MCF 10A (cell line): ENCODE measurements at regions of chr2 and their contacts with region 1.

Region 1: DNA sequence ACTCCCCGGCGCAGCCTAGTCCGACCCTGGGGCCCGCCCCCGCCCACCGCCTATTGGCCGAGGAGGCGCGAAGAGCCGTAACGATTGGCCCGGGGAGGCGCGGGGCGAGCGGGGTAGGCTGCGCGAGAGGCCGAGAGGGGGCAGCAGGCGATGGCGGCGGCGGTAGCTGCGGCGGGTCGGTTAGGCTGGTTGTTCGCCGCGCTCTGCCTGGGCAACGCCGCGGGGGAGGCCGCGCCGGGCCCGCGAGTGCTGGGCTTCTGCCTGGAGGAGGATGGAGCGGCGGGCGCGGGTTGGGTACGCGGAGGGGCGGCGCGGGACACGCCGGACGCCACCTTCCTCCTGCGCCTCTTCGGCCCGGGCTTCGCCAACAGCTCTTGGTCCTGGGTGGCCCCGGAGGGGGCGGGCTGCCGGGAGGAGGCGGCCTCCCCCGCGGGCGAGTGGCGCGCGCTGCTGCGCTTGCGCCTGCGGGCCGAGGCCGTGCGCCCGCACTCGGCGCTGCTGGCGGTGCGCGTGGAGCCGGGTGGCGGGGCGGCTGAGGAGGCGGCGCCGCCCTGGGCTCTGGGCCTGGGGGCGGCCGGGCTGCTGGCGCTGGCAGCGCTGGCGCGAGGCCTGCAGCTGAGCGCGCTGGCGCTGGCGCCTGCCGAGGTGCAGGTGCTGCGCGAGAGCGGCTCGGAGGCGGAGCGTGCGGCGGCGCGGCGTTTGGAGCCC is at the start of gene CNNM3:
- DNase-seq: peak; percentile 92
- H3K4me3 Mint-ChIP-seq: peak within 1 kb of the TSS; percentile 77
- H3K27ac Mint-ChIP-seq: peak within 1 kb of the TSS; percentile 18
- H3K4me1 Mint-ChIP-seq: peaks cover 20% of the 10 kb centered on the region
- H3K27me3 Mint-ChIP-seq: no peaks in the 10 kb centered on the region
- CTCF ChIP-seq: peak; percentile 59
- total RNA-seq, gene CNNM3: 9.1 and 9.9 TPM in 2 replicates

Region 2: DNA sequence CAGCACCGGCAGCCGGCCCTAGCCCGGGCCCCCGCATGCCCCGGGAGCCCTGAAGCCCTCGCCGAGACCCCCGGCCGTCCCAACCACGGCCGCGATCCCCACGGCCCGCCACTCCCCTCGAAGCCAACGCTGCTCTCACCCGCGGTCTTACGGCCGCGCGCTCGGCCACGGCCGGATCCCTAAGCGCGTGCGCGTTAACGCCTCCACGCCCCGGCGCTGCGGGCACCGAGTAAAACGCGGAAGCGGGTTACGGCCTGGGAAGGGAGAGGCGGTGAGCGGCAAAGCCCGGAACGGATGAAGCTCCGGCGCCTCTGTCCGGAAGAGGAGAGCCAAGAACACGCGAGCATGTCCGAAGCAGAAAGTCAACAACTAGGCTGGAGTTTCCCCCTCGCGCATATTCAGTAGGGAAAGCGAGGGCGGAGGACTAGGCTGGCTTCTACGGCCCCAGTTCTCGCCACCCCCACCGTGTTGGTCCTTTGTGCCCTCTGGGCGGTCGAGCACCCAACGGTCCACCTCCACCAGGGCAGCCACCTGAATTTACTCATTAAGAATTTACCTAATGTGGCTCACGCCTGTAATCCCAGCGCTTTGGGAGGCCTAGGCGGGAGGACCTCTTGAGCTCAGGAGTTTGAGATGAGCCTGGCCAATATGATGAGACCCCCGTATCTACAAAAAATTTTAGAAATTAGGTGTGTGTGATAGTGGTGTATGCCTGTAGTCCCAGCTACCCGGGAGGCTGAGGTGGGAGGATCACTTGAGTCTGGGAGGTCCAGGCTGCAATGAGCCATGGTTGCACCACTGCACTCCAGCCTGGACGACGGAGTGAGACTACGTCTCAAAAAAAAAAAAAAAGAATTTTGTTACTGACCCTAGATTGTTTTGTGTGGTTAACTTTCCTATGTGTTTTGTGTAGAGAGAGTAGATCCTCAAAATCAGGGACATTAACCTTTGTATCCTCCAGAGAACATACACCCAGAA is 177.8 kb before region 1 on chr2 and contains the start of gene KANSL3:
- CTCF ChIA-PET with region 1: no interaction called
- POLR2A ChIA-PET with region 1: interaction called, 13 read pairs
- intact Hi-C with region 1: no loop called
- DNase-seq: peak; percentile 92
- H3K4me3 Mint-ChIP-seq: peak within 1 kb of the TSS; percentile 83
- H3K27ac Mint-ChIP-seq: peak within 1 kb of the TSS; percentile 88
- H3K4me1 Mint-ChIP-seq: peaks cover 20% of the 10 kb centered on the region
- H3K27me3 Mint-ChIP-seq: no peaks in the 10 kb centered on the region
- CTCF ChIP-seq: no peak
- total RNA-seq, gene KANSL3: 36.0 and 41.4 TPM in 2 replicates

Region 3: DNA sequence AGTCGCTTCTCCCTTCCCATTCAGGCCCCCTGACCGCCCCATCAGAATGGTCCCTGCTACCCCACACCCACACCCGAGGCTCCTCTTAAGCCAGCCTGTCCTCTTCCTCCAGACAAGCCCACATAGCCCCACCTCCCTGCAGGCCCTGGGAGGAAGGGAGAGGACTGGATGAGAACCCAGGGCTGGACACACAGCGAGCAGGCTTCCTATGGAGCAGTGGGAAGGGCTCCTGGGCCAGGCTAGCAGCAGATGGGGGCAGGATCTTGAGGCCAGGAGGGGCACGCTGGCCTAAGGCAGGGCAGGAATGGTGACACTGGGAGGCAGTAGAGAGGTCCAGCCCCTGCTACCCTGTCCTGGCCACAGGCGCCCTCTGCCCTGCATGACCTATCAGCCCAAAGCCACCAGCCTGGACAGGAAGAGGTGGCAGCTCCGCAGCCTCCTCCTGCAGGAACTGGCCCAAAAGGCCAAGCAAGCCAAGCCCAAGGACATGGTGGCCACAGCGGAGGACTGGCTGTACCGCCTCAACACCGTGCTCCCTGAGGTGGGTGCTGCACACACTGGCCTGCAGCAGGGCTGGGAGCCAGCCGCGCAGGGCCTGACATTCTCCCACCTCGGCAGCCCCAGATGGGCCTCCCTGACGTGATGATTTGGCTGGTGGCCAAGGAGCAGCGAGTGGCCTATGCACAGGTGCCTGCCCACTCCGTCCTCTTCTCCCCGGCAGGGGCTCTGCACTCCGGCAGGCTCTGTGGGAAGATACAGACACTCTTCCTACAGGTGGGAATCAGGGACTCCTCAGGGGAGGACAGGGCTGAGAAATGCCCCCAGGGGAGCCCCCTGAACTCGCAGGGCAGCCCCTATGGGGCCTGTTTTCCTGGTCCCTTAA is 130.5 kb before region 1 on chr2:
- CTCF ChIA-PET with region 1: no interaction called
- POLR2A ChIA-PET with region 1: no interaction called
- intact Hi-C with region 1: no loop called
- DNase-seq: no peak
- H3K4me3 Mint-ChIP-seq: no peak overlapping the region
- H3K27ac Mint-ChIP-seq: no peak overlapping the region
- H3K4me1 Mint-ChIP-seq: no peaks in the 10 kb centered on the region
- H3K27me3 Mint-ChIP-seq: peaks cover 2% of the 10 kb centered on the region
- CTCF ChIP-seq: no peak

Region 4: DNA sequence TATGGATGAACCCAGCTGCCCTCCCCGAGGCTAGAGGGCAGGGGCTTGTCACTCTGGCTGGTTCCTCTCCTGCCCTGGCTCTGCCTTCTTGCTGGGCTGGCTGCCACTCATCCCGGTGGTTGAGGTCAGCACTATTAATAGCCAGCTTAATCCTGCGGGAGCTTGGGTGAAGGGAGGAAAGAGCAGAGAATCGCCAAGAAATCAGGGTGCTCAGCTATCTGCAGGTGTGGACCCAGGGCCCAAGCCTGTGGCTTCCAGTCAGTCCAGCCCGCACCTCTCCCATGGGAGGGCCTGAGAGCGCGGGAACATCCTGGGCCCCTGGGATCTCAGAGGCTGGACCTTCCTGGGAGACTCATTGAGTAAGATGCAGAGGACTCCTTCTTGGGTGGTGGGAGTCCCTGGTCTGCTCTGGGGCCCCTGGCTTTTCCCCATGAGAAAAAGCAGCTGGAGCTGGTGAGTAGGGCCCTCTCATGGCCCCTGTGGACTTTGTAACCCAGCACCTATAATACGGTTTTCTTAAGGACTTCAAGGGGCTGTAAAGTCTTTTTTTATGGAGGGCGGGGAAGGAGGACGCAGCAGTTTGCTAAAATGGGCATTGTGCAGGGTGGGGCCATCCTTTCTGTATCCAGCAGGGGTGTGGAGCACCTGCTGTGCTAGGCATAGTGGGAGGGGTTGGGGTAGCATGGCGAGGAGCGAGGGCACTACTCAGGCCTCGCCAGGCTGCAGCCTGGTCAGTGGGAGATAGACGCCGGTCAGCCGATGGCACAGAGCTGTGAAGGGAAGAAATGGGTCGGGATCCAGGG is 27.6 kb before region 1 on chr2:
- CTCF ChIA-PET with region 1: no interaction called
- POLR2A ChIA-PET with region 1: interaction called, 15 read pairs
- intact Hi-C with region 1: no loop called
- DNase-seq: peak; percentile 54
- H3K4me3 Mint-ChIP-seq: no peak overlapping the region
- H3K27ac Mint-ChIP-seq: peak overlapping the region; percentile 92
- H3K4me1 Mint-ChIP-seq: peaks cover 15% of the 10 kb centered on the region
- H3K27me3 Mint-ChIP-seq: no peaks in the 10 kb centered on the region
- CTCF ChIP-seq: no peak

Region 5: GRCh38 chr2:96856776-96857673 is 40.7 kb after region 1 on chr2:
- CTCF ChIA-PET with region 1: interaction called, 5 read pairs
- POLR2A ChIA-PET with region 1: interaction called, 16 read pairs
- intact Hi-C with region 1: no loop called
- DNase-seq: no peak
- H3K4me3 Mint-ChIP-seq: peak overlapping the region; percentile 60
- H3K27ac Mint-ChIP-seq: peak overlapping the region; percentile 49
- H3K4me1 Mint-ChIP-seq: peaks cover 14% of the 10 kb centered on the region
- H3K27me3 Mint-ChIP-seq: no peaks in the 10 kb centered on the region
- CTCF ChIP-seq: no peak

Region 6: DNA sequence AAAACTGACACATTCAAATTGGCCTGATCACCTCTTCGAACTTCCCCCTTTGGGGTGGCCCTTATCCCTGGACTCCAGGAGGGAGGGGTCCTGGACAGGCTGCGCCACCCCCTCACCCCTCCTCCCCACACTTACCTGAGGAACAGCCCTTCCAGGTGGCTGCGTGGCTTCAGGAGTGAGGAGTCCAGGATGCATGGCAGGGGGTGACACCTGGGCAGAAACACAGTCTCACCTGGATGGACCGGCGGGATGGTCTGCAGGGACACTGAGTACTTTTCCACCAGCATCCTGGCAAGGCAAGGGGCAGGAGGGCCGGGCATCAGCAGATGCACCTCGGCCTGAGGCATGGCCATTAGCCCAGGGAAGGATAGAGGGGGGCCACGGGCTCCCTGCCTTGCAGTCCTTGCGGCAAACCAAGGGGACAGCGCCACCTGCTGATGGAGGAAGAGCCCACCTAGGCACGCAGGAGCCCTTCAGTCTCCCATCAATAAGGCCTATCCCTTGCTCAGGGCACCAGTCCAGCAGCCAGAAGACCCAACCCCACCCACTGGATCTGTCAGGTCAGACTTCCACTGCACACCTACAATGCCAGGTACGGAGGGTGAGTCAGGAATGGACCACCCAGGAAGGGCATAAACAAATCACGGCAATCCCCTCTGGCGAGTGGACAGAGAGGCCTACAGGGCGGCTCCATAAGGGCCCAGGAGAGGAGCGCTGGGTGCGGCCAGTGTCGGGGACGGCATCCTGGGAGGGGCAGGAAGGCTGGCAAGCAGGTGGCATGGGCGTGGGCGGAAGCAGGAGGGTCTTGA is 144.1 kb after region 1 on chr2:
- CTCF ChIA-PET with region 1: no interaction called
- POLR2A ChIA-PET with region 1: no interaction called
- intact Hi-C with region 1: loop called (anchors 2 kb)
- DNase-seq: peak; percentile 83
- H3K4me3 Mint-ChIP-seq: no peak overlapping the region
- H3K27ac Mint-ChIP-seq: no peak overlapping the region
- H3K4me1 Mint-ChIP-seq: no peaks in the 10 kb centered on the region
- H3K27me3 Mint-ChIP-seq: no peaks in the 10 kb centered on the region
- CTCF ChIP-seq: peak; percentile 94

Region 7: GRCh38 chr2:98127229-98127989 is 1311.1 kb after region 1 on chr2:
- CTCF ChIA-PET with region 1: no interaction called
- POLR2A ChIA-PET with region 1: no interaction called
- intact Hi-C with region 1: no loop called
- DNase-seq: peak; percentile 63
- H3K4me3 Mint-ChIP-seq: no peak overlapping the region
- H3K27ac Mint-ChIP-seq: no peak overlapping the region
- H3K4me1 Mint-ChIP-seq: peaks cover 6% of the 10 kb centered on the region
- H3K27me3 Mint-ChIP-seq: peaks cover 28% of the 10 kb centered on the region
- CTCF ChIP-seq: no peak